Activated CD8-positive, alpha-beta T cell treated with anti-CD3 and anti-CD28 coated beads for 36 hours (primary cell): ENCODE measurements at regions of chr12 and their contacts with region 1.

Region 1: GRCh38 chr12:52884526-52885293 is 20.2 kb downstream of the KRT8 start:
- DNase-seq: peak; percentile 90
- ATAC-seq: peak; percentile 93
- H3K4me3 Mint-ChIP-seq: no peak overlapping the region
- H3K27ac Mint-ChIP-seq: no peak overlapping the region
- H3K4me1 Mint-ChIP-seq: peaks cover 3% of the 10 kb centered on the region
- H3K27me3 Mint-ChIP-seq: peaks cover 6% of the 10 kb centered on the region
- CTCF ChIP-seq: peak; percentile 94

Region 2: GRCh38 chr12:52870351-52871290 is 14.1 kb before region 1 on chr12:
- CTCF ChIA-PET with region 1: interaction called, 81 read pairs
- POLR2A ChIA-PET with region 1: interaction called, 3 read pairs
- intact Hi-C with region 1: no loop called
- DNase-seq: peak; percentile 89
- ATAC-seq: peak; percentile 75
- H3K4me3 Mint-ChIP-seq: no peak overlapping the region
- H3K27ac Mint-ChIP-seq: no peak overlapping the region
- H3K4me1 Mint-ChIP-seq: peaks cover 29% of the 10 kb centered on the region
- H3K27me3 Mint-ChIP-seq: no peaks in the 10 kb centered on the region
- CTCF ChIP-seq: peak; percentile 87

Region 3: GRCh38 chr12:52910248-52910883 is 25.7 kb after region 1 on chr12:
- CTCF ChIA-PET with region 1: interaction called, 41 read pairs
- POLR2A ChIA-PET with region 1: no interaction called
- intact Hi-C with region 1: no loop called
- DNase-seq: no peak
- ATAC-seq: no peak
- H3K4me3 Mint-ChIP-seq: no peak overlapping the region
- H3K27ac Mint-ChIP-seq: no peak overlapping the region
- H3K4me1 Mint-ChIP-seq: no peaks in the 10 kb centered on the region
- H3K27me3 Mint-ChIP-seq: peaks cover 2% of the 10 kb centered on the region
- CTCF ChIP-seq: no peak

Region 4: GRCh38 chr12:52949413-52950331 is 65.0 kb after region 1 on chr12:
- CTCF ChIA-PET with region 1: interaction called, 67 read pairs
- POLR2A ChIA-PET with region 1: interaction called, 4 read pairs
- intact Hi-C with region 1: no loop called
- DNase-seq: no peak
- ATAC-seq: no peak
- H3K4me3 Mint-ChIP-seq: peak overlapping the region; percentile 57
- H3K27ac Mint-ChIP-seq: no peak overlapping the region
- H3K4me1 Mint-ChIP-seq: no peaks in the 10 kb centered on the region
- H3K27me3 Mint-ChIP-seq: peaks cover 2% of the 10 kb centered on the region
- CTCF ChIP-seq: no peak

Region 5: GRCh38 chr12:52980693-52981423 is 96.1 kb after region 1 on chr12:
- CTCF ChIA-PET with region 1: interaction called, 552 read pairs
- POLR2A ChIA-PET with region 1: interaction called, 5 read pairs
- intact Hi-C with region 1: loop called (anchors 1 kb)
- DNase-seq: peak; percentile 93
- ATAC-seq: peak; percentile 95
- H3K4me3 Mint-ChIP-seq: no peak overlapping the region
- H3K27ac Mint-ChIP-seq: no peak overlapping the region
- H3K4me1 Mint-ChIP-seq: no peaks in the 10 kb centered on the region
- H3K27me3 Mint-ChIP-seq: peaks cover 27% of the 10 kb centered on the region
- CTCF ChIP-seq: peak; percentile 97

Region 6: GRCh38 chr12:53169644-53170043 is 284.9 kb after region 1 on chr12:
- CTCF ChIA-PET with region 1: no interaction called
- POLR2A ChIA-PET with region 1: no interaction called
- intact Hi-C with region 1: no loop called
- DNase-seq: no peak
- ATAC-seq: no peak
- H3K4me3 Mint-ChIP-seq: no peak overlapping the region
- H3K27ac Mint-ChIP-seq: no peak overlapping the region
- H3K4me1 Mint-ChIP-seq: peaks cover 3% of the 10 kb centered on the region
- H3K27me3 Mint-ChIP-seq: no peaks in the 10 kb centered on the region
- CTCF ChIP-seq: no peak